ENCODE measurements at regions of chr19 and their contacts with region 1.

Region 1: GRCh38 chr19:27974082-27974513 is 1238.9 kb downstream of the UQCRFS1 start:
- DNase-seq: no peak
- ATAC-seq: peak in 2 of 4 donors; percentile 48 to 63
- H3K4me3 ChIP-seq: no peak overlapping the region
- H3K27ac ChIP-seq: no peak overlapping the region
- H3K4me1 ChIP-seq: no peaks in the 10 kb centered on the region
- H3K27me3 ChIP-seq: peaks cover 0 to 13% (median 0%) of the 10 kb centered on the region in 9 donors
- CTCF ChIP-seq: peak; percentile 17 to 70 (median 52)
- POLR2A ChIP-seq: no peak

Region 2: GRCh38 chr19:28065026-28065425 is 90.9 kb after region 1 on chr19:
- intact Hi-C with region 1: no loop called
- DNase-seq: no peak
- ATAC-seq: no peak
- H3K4me3 ChIP-seq: no peak overlapping the region
- H3K27ac ChIP-seq: no peak overlapping the region
- H3K4me1 ChIP-seq: no peaks in the 10 kb centered on the region
- H3K27me3 ChIP-seq: peaks cover 0 to 2% (median 0%) of the 10 kb centered on the region in 9 donors
- CTCF ChIP-seq: no peak
- POLR2A ChIP-seq: no peak

Region 3: DNA sequence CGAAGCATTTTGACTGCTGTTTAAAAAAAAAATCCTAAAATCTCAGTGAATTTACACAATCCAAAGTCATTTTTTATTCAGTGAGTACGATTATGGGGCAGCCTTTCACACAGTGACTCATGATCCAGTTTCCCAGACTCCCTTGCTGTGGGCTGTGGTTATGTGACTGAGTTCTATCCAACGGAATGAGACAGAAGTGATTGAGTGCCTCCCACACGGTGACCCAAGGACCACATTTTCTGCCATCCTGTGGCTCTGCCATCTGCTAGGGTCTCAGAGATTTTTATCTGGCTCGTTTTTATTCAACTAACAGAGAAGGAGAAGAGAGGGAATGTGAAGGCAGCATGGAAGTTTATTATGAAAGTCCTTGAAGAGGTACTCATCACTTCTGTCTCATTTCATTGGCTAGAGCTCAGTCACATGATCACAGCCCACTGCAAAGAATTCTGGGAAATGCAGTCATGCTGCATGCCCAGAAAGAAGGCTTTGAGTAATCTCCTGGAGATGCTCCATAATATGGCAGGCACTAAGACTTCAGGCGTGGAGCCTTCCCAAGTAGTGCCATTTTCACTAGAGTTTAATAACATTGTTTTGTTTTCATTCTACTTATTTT is 239.5 kb after region 1 on chr19:
- intact Hi-C with region 1: loop called in 1 of 10 experiments (anchors 10 kb)
- DNase-seq: no peak
- ATAC-seq: no peak
- H3K4me3 ChIP-seq: no peak overlapping the region
- H3K27ac ChIP-seq: no peak overlapping the region
- H3K4me1 ChIP-seq: no peaks in the 10 kb centered on the region
- H3K27me3 ChIP-seq: peaks cover 0 to 8% (median 0%) of the 10 kb centered on the region in 9 donors
- CTCF ChIP-seq: no peak
- POLR2A ChIP-seq: no peak

Region 4: DNA sequence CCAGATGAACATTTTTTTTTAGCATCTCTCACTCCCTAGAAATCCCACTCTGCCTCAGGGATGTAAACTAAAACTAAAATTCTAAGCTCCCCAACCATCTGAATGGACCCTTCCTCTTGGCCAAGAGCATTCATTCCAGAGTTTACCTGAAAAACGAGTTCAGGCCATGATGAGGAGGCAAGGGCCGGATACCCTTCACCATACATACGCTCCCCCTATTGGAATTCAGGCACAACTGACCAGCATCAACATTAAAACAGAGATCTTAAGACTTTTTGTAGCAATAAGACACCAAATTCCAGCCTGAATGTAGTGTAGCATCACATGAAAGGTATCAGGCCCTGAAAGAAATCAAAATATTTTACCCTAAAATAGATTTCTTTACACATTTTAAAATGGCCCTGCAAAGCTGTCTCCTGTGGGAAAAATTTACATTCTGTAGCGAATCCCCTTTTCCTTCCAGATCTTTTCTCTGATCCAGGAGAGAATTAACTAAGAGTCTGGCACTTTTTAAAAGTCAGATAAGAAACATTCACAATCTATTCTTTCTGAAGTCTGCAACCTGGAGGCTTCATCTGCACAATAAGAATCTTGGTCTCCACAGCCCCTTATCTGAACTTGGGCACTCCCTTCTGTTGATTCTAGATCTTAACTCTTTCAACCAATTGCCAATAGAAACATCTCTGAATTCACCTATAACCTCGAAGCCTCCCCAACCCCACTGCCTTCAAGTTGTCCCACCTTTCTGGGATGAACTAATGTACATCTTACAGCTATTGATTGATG is 350.4 kb after region 1 on chr19:
- intact Hi-C with region 1: loop called (anchors 1 to 5 kb)
- DNase-seq: no peak
- ATAC-seq: no peak
- H3K4me3 ChIP-seq: no peak overlapping the region
- H3K27ac ChIP-seq: no peak overlapping the region
- H3K4me1 ChIP-seq: peaks cover 0 to 4% (median 0%) of the 10 kb centered on the region in 12 donors
- H3K27me3 ChIP-seq: no peaks in the 10 kb centered on the region
- CTCF ChIP-seq: no peak
- POLR2A ChIP-seq: no peak

Region 5: GRCh38 chr19:28710278-28710677 is 736.2 kb after region 1 on chr19:
- intact Hi-C with region 1: loop called in 5 of 10 experiments (anchors 5 to 10 kb)
- DNase-seq: no peak
- ATAC-seq: no peak
- H3K4me3 ChIP-seq: no peak overlapping the region
- H3K27ac ChIP-seq: no peak overlapping the region
- H3K4me1 ChIP-seq: no peaks in the 10 kb centered on the region
- H3K27me3 ChIP-seq: peaks cover 0 to 10% (median 0%) of the 10 kb centered on the region in 9 donors
- CTCF ChIP-seq: peak; percentile 43 to 77 (median 70)
- POLR2A ChIP-seq: no peak

Region 6: DNA sequence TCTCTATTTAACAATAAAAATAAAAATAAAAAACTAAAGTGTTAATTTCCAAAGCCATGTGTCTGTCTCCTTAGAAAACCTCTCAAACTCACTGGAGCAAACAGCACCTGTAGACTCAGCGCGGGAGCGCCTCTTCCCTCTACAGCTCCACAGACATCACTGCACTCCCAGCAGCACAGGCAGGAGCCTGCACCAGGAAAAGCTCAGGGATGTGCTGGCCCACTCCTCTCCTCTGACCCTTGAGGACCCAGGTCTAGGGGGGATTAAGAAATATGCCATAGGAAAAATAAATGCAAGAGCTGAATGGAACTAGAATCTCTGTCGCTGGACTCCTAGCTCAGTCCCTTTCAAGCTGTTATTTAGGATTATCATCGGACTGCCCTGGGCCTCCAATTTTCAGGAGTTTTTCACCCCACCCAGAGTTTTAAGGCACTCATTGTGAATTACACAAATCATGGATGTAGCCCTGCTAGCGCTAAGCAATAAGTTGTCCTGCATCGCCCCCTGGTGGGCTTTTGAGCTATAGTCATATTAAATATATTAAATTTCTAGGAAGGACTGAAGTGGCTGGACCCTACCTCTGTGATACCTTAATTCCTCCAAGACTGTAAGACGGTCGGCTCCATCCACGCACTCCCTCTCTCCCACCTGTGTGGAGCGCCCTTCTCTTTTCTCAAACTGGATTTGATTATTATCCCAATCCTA is 904.9 kb after region 1 on chr19:
- intact Hi-C with region 1: loop called in 2 of 10 experiments (anchors 5 to 10 kb)
- DNase-seq: peak; percentile 42 to 75 (median 67)
- ATAC-seq: peak in 3 of 4 donors; percentile 23 to 40 (median 23)
- H3K4me3 ChIP-seq: no peak overlapping the region
- H3K27ac ChIP-seq: no peak overlapping the region
- H3K4me1 ChIP-seq: peaks cover 0 to 15% (median 5%) of the 10 kb centered on the region in 12 donors
- H3K27me3 ChIP-seq: no peaks in the 10 kb centered on the region
- CTCF ChIP-seq: peak; percentile 53 to 84 (median 73)
- POLR2A ChIP-seq: no peak

Measured in heart left ventricle (tissue), 16 donors.